Breast epithelium (tissue), 4 donors: ENCODE measurements at regions of chr7 and their contacts with region 1.

Region 1: GRCh38 chr7:48154792-48155413 is 16.4 kb upstream of the ABCA13 start:
- DNase-seq: no peak
- H3K4me3 ChIP-seq: no peak overlapping the region
- H3K27ac ChIP-seq: no peak overlapping the region
- H3K4me1 ChIP-seq: no peaks in the 10 kb centered on the region
- H3K27me3 ChIP-seq: no peaks in the 10 kb centered on the region
- CTCF ChIP-seq: no peak
- POLR2A ChIP-seq: no peak

Region 2: GRCh38 chr7:46282155-46282554 is 1872.7 kb before region 1 on chr7:
- intact Hi-C with region 1: no loop called
- DNase-seq: no peak
- H3K4me3 ChIP-seq: no peak overlapping the region
- H3K27ac ChIP-seq: no peak overlapping the region
- H3K4me1 ChIP-seq: no peaks in the 10 kb centered on the region
- H3K27me3 ChIP-seq: no peaks in the 10 kb centered on the region
- CTCF ChIP-seq: no peak
- POLR2A ChIP-seq: no peak

Region 3: DNA sequence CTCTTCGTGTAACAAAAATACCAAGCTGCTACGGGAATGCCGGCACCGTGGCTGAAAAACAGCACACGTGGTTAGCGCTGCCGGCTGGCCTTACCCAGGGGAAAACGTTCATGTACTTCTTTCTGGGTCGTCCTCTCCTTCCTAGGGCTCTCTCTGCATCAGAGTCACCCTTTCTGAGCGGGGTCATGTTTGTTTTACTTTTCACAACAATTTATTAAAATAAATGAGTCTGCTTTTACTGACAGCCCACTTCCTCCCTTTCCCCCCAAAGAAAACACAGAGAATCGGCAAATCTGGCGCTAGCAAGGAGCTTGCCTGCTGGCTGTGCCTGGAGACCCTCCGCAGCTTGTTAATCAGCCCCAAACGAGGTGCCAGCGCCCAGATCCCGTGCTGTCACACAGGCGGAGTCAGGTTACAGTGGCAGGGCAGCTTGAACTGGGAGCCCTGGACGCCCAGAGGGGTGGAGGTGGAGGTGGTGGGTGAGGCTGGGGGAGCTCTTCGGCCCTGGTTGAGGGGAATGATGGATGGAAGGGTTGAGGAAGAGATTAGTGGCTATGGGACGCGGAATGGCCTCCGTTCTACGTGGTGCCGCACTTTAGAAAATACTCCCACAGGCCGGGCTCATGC is 410.8 kb before region 1 on chr7:
- intact Hi-C with region 1: no loop called
- DNase-seq: no peak
- H3K4me3 ChIP-seq: no peak overlapping the region
- H3K27ac ChIP-seq: no peak overlapping the region
- H3K4me1 ChIP-seq: no peaks in the 10 kb centered on the region
- H3K27me3 ChIP-seq: no peaks in the 10 kb centered on the region
- CTCF ChIP-seq: no peak
- POLR2A ChIP-seq: no peak

Region 4: GRCh38 chr7:49001610-49002033 is 846.7 kb after region 1 on chr7:
- intact Hi-C with region 1: loop called (anchors 10 kb)
- DNase-seq: no peak
- H3K4me3 ChIP-seq: no peak overlapping the region
- H3K27ac ChIP-seq: no peak overlapping the region
- H3K4me1 ChIP-seq: no peaks in the 10 kb centered on the region
- H3K27me3 ChIP-seq: no peaks in the 10 kb centered on the region
- CTCF ChIP-seq: peak in 1 of 3 donors; percentile 8
- POLR2A ChIP-seq: no peak